ENCODE measurements at regions of chr1 and their contacts with region 1.

Region 1: GRCh38 chr1:67596674-67597073 is 88.3 kb upstream of the GADD45A start:
- DNase-seq: no peak
- ATAC-seq: no peak
- H3K4me3 ChIP-seq: no peak overlapping the region
- H3K27ac ChIP-seq: no peak overlapping the region
- H3K4me1 ChIP-seq: peaks cover 4 to 5% of the 10 kb centered on the region in 2 experiments; a peak in 3 of 5 replicates
- H3K27me3 ChIP-seq: no peaks in the 10 kb centered on the region
- CTCF ChIP-seq: no peak
- EP300 ChIP-seq: no peak
- POLR2A ChIP-seq: no peak
- RAD21 ChIP-seq: no peak

Region 2: GRCh38 chr1:67608661-67609571 is 12.2 kb after region 1 on chr1:
- CTCF ChIA-PET with region 1: no interaction called
- POLR2A ChIA-PET with region 1: interaction called, 10 read pairs
- in situ Hi-C with region 1: no loop called
- intact Hi-C with region 1: no loop called
- DNase-seq: no peak
- ATAC-seq: no peak
- H3K4me3 ChIP-seq: no peak overlapping the region
- H3K27ac ChIP-seq: no peak overlapping the region
- H3K4me1 ChIP-seq: no peaks in the 10 kb centered on the region
- H3K27me3 ChIP-seq: no peaks in the 10 kb centered on the region; a peak in 1 of 5 replicates
- CTCF ChIP-seq: no peak
- EP300 ChIP-seq: no peak
- POLR2A ChIP-seq: no peak
- RAD21 ChIP-seq: no peak

Measured in K562 (cell line).